ENCODE measurements at regions of chr7 and their contacts with region 1.

Region 1: DNA sequence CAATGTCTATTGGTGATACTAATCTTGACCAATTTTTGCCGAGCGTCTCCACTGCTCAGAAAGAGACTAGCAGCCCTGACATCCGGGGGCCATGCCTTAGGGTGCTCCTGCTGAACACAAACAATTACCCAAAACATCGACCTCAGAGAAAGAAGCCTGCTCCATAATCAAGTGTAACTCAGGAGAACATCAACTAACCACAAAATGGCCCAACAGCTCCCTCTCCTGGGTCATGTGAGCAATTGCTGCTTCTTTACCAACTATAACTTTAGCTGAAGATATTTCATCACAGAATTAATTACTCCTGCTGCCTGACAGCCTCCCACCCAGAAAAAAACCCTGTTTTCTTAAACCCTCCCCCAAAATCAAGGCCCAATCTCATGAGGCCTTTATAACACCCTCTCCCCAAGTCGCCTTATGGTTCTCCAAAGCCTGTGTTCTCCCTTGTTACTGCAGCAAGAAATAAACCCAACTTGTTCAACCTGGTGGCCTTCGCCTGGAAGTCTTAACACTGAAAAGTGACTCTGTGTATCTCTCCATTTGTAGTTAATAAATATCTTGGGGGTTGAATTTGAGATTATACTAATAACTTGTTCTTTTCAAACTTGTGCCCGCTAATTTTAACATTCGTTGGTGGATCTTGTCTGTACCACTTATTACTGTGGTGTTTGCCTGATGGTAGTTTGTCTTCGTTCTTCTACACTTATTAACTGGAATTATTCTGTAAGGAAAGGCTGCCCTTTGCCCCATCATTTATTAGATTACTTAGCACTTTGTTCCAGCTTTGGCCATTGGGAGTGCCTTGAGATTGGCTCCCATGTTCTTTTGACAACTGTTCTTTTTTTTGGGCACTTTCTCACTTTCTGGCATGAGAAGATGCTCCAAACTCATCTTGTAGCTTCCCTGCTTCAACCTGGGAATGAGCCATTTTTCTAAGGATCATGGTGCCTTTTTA is 21.2 kb upstream of the RAMP3 start:
- DNase-seq: peak; percentile 43 to 72 (median 51)
- H3K4me3 ChIP-seq: no peak overlapping the region
- H3K27ac ChIP-seq: no peak overlapping the region
- H3K4me1 ChIP-seq: no peaks in the 10 kb centered on the region
- H3K27me3 ChIP-seq: no peaks in the 10 kb centered on the region
- CTCF ChIP-seq: peak; percentile 33 to 71 (median 66)
- EP300 ChIP-seq: no peak
- POLR2A ChIP-seq: no peak

Region 2: DNA sequence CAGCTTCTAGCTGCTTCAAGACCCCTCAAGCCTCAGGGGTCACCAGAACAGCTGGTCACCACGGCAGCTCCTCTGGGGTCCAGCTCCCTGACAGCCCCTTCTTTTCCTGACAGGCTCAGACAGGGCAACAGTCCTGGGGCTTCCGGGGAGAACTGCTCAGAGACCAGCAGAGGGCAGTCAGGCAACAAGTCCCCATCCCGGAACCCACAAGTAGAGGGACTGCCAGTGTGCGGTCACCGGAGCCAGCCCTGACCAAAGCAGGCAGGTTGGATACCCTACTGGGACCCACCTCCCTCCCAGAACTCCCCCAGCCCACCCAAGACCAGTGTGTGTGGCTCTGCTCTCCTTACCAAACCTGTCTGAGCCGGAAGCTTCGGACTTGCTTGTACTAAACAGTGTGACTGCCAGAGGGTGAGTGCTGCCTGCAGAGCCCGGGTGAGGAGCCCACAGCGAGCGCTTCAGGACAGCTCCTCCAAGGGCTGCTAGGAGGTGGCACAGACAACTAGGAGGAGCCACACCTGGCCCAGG is 895.3 kb before region 1 on chr7:
- intact Hi-C with region 1: loop called in 1 of 4 experiments (anchors 10 kb)
- DNase-seq: peak; percentile 63 to 73 (median 72)
- H3K4me3 ChIP-seq: no peak overlapping the region
- H3K27ac ChIP-seq: no peak overlapping the region
- H3K4me1 ChIP-seq: no peaks in the 10 kb centered on the region
- H3K27me3 ChIP-seq: no peaks in the 10 kb centered on the region
- CTCF ChIP-seq: peak; percentile 34 to 64 (median 51)
- EP300 ChIP-seq: no peak
- POLR2A ChIP-seq: no peak

Region 3: GRCh38 chr7:44587843-44588711 is 548.3 kb before region 1 on chr7:
- intact Hi-C with region 1: loop called in 2 of 4 experiments (anchors 5 to 10 kb)
- DNase-seq: peak in 2 of 5 donors; percentile 43 to 58
- H3K4me3 ChIP-seq: no peak overlapping the region
- H3K27ac ChIP-seq: no peak overlapping the region
- H3K4me1 ChIP-seq: no peaks in the 10 kb centered on the region
- H3K27me3 ChIP-seq: no peaks in the 10 kb centered on the region
- CTCF ChIP-seq: peak in 2 of 3 donors; percentile 24 to 49
- EP300 ChIP-seq: no peak
- POLR2A ChIP-seq: no peak

Region 4: GRCh38 chr7:44595934-44596635 is 540.3 kb before region 1 on chr7:
- intact Hi-C with region 1: loop called in 1 of 4 experiments (anchors 10 kb)
- DNase-seq: no peak
- H3K4me3 ChIP-seq: no peak overlapping the region
- H3K27ac ChIP-seq: no peak overlapping the region
- H3K4me1 ChIP-seq: no peaks in the 10 kb centered on the region
- H3K27me3 ChIP-seq: no peaks in the 10 kb centered on the region
- CTCF ChIP-seq: no peak
- EP300 ChIP-seq: no peak
- POLR2A ChIP-seq: no peak

Region 5: GRCh38 chr7:44858161-44858560 is 278.2 kb before region 1 on chr7:
- intact Hi-C with region 1: loop called in 3 of 4 experiments (anchors 2 to 5 kb)
- DNase-seq: no peak
- H3K4me3 ChIP-seq: no peak overlapping the region
- H3K27ac ChIP-seq: no peak overlapping the region
- H3K4me1 ChIP-seq: peaks cover 1% of the 10 kb centered on the region
- H3K27me3 ChIP-seq: no peaks in the 10 kb centered on the region
- CTCF ChIP-seq: no peak
- EP300 ChIP-seq: no peak
- POLR2A ChIP-seq: no peak

Region 6: DNA sequence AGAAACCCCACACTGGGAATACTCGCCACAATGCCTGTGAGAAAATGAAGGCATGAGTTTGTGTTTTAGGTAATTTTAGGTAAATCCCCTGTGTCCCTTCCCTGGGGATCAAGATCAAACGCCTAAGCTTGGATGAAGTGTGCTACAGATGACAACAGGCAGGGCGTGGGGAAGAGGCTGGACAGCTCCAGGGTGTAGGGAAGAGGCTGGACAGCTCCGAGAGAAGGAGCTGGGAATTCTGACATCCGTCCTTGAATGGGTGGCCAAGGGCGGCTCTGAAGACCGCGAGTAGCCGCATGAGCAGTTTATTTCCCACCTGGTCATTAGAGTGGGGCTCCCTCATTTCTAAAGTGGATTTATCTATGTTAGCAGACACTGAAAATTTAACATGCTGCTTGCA is 130.9 kb after region 1 on chr7:
- intact Hi-C with region 1: no loop called
- DNase-seq: no peak
- H3K4me3 ChIP-seq: no peak overlapping the region
- H3K27ac ChIP-seq: no peak overlapping the region
- H3K4me1 ChIP-seq: no peaks in the 10 kb centered on the region
- H3K27me3 ChIP-seq: no peaks in the 10 kb centered on the region
- CTCF ChIP-seq: no peak
- EP300 ChIP-seq: no peak
- POLR2A ChIP-seq: no peak